ENCODE measurements at regions of chr7 and their contacts with region 1.

Region 1: GRCh38 chr7:101990811-101991418 is 173.5 kb downstream of the CUX1 start:
- DNase-seq: peak; percentile 88
- ATAC-seq: peak; percentile 87
- H3K4me3 ChIP-seq: peak overlapping the region; percentile 50
- H3K27ac ChIP-seq: peak overlapping the region; percentile 93
- H3K4me1 ChIP-seq: peaks cover 74% of the 10 kb centered on the region
- H3K27me3 ChIP-seq: no peaks in the 10 kb centered on the region
- CTCF ChIP-seq: peak; percentile 2 to 7 (median 3); a peak in 1 of 6 replicates
- EP300 ChIP-seq: peak; percentile 85 to 87
- POLR2A ChIP-seq: peak; percentile 43; the same call in 1 of the 2 replicates
- RAD21 ChIP-seq: peak; percentile 43; the same call in 1 of the 2 replicates

Region 2: DNA sequence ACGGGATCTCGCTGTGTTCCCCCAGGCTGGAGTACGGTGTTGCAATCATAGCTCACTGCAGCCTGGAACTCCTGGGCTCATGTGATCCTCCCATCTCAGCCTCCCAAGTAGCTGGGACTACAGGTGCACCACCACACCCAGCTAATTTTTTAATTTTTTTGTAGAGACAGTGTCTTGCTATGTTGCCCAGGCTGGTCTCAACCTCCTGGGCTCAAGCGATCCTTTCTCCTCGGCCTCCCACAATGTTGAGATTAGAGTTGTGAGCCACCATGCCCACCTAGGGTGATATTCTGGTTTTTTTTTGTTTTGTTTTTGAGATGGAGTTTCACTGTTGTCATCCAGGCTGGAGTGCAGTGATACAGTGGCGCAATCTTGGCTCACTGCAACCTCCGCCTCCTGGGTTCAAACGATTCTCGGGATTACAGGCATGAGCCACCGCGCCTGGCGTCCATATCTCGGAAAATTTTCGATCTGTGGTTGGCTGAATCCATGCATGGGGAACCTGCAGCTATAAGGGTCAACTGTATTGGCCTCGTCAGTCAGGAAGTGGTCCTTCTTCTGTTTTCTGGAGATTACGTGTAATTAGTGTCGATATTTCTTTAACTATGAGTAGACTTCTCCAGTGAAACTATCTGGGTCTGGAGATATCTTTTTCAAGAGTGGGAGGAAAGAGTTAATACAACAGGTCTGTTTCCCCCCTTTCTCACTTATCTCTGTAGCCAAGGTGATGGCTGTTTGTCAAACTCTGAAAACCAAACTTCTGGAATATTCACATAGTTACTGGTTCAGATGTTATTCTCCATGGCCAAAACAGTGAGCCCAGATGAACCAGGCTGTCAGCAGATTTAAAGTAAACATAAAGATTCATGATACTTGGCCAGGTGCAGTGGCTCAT is 725.0 kb before region 1 on chr7:
- CTCF ChIA-PET with region 1: no interaction called
- POLR2A ChIA-PET with region 1: no interaction called
- RAD21 ChIA-PET with region 1: no interaction called
- SMC1A ChIA-PET with region 1: no interaction called
- in situ Hi-C with region 1: no loop called
- intact Hi-C with region 1: no loop called
- DNase-seq: no peak
- ATAC-seq: 0 out of 3 replicates have a peak, but pooled peaks have one; percentile 17
- H3K4me3 ChIP-seq: no peak overlapping the region
- H3K27ac ChIP-seq: no peak overlapping the region
- H3K4me1 ChIP-seq: no peaks in the 10 kb centered on the region
- H3K27me3 ChIP-seq: no peaks in the 10 kb centered on the region
- CTCF ChIP-seq: no peak
- EP300 ChIP-seq: no peak
- POLR2A ChIP-seq: no peak
- RAD21 ChIP-seq: no peak

Region 3: DNA sequence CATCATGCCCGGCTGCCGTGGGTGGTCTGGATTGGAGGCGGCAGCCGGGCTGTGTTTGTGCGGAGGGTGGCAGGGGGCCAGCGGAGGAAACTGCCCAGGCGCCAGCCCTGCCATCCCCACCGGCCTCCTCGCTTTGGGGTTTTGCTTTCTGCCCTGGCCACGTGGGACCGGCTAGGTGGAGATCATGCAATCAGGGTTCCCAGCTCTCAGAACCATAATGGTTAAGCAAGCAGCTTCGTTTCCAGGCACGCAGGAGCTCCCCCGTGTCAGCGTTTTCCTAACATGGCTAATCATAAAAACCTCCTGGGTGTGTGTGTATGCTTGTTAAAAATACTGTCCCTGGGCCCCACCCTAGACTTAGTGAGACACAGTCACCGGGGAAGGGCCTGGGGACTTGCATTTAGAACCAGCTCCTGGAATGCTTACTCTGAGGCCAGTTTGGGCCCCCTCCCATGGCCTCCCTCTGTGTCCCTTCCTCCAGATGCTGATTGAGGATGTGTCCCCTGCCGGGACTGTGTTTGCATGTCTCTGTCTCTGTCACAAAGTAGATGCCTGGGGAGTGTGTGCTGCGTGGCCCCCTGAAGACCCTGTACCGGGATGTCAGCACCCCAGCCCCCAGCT is 54.2 kb before region 1 on chr7:
- CTCF ChIA-PET with region 1: interaction called, 3 read pairs
- POLR2A ChIA-PET with region 1: interaction called, 7 read pairs
- RAD21 ChIA-PET with region 1: interaction called, 15 read pairs
- SMC1A ChIA-PET with region 1: interaction called, 37 read pairs
- in situ Hi-C with region 1: no loop called
- intact Hi-C with region 1: loop called (anchors 2 kb)
- DNase-seq: no peak
- ATAC-seq: no peak
- H3K4me3 ChIP-seq: no peak overlapping the region
- H3K27ac ChIP-seq: no peak overlapping the region
- H3K4me1 ChIP-seq: peaks cover 63% of the 10 kb centered on the region
- H3K27me3 ChIP-seq: no peaks in the 10 kb centered on the region
- CTCF ChIP-seq: no peak
- EP300 ChIP-seq: no peak
- POLR2A ChIP-seq: no peak
- RAD21 ChIP-seq: no peak

Region 4: GRCh38 chr7:101974393-101974792 is 16.5 kb before region 1 on chr7:
- CTCF ChIA-PET with region 1: interaction called, 3 read pairs
- POLR2A ChIA-PET with region 1: interaction called, 4 read pairs
- RAD21 ChIA-PET with region 1: interaction called, 46 read pairs
- SMC1A ChIA-PET with region 1: interaction called, 29 read pairs
- in situ Hi-C with region 1: no loop called
- intact Hi-C with region 1: no loop called
- DNase-seq: no peak
- ATAC-seq: no peak
- H3K4me3 ChIP-seq: no peak overlapping the region
- H3K27ac ChIP-seq: no peak overlapping the region
- H3K4me1 ChIP-seq: peaks cover 11% of the 10 kb centered on the region; the same call in 1 of the 2 replicates
- H3K27me3 ChIP-seq: no peaks in the 10 kb centered on the region
- CTCF ChIP-seq: no peak
- EP300 ChIP-seq: no peak
- POLR2A ChIP-seq: no peak
- RAD21 ChIP-seq: no peak

Region 5: DNA sequence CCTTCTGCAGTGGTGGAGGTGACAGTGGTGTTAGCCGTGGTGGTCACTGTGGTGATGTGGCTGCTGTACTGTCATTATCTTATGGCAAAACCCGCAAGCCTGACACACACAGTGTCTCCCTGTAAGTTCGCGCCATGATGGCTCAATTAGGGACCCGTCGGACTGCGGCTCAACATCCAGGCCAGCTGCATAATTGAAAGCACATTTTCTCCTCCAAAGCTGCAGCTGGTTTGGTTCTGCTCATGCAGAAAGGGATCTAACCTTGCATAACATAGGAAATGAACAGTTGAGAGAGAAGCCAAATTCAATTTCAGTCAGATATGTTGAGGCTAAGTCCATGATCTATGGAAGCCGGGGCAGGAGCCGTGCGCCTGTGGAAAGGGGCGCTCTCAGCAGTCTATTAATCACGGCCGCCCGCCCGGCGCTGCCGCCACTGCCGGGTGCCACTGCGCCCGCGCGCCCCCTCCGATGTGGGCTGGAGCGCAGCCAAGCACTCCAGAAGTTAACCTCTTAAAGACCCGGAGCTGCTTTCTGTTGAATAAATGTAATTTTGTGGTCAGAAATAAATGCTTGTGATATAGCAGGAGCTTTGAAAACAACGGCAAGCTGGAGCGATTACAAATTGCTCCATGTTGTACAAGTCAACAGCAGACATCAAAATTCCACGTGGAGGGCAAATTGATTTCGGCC is 54.2 kb after region 1 on chr7:
- CTCF ChIA-PET with region 1: interaction called, 3 read pairs
- POLR2A ChIA-PET with region 1: interaction called, 3 read pairs
- RAD21 ChIA-PET with region 1: interaction called, 12 read pairs
- SMC1A ChIA-PET with region 1: interaction called, 9 read pairs
- in situ Hi-C with region 1: no loop called
- intact Hi-C with region 1: loop called (anchors 5 kb)
- DNase-seq: no peak
- ATAC-seq: no peak
- H3K4me3 ChIP-seq: no peak overlapping the region
- H3K27ac ChIP-seq: no peak overlapping the region
- H3K4me1 ChIP-seq: peaks cover 54% of the 10 kb centered on the region
- H3K27me3 ChIP-seq: no peaks in the 10 kb centered on the region
- CTCF ChIP-seq: no peak
- EP300 ChIP-seq: no peak
- POLR2A ChIP-seq: no peak
- RAD21 ChIP-seq: no peak

Region 6: DNA sequence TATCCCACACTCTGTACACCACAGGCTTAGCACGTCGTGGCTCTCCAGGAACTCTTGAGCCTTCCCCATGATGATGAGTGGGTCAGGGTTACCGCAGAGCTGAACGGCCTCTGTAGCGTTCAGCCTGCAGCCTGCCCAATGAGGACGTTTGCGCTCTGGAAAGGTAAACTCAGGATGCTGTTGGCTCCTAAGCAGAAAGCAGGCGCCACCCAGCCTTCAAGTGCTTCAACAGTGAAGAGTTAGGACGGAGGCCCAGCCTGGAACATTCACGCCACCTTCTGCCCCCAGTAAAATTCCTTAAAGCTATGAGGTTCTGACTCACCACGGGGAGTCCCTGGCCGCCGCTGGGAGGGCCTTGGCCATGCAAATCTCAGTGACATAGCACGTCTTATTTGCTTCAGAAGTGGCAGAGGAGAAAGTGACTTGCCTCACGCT is 134.2 kb after region 1 on chr7:
- CTCF ChIA-PET with region 1: interaction called, 3 read pairs
- POLR2A ChIA-PET with region 1: no interaction called
- RAD21 ChIA-PET with region 1: interaction called, 11 read pairs
- SMC1A ChIA-PET with region 1: interaction called, 4 read pairs
- in situ Hi-C with region 1: no loop called
- intact Hi-C with region 1: no loop called
- DNase-seq: peak; percentile 51
- ATAC-seq: peak; percentile 94
- H3K4me3 ChIP-seq: no peak overlapping the region
- H3K27ac ChIP-seq: peak overlapping the region; percentile 4; the same call in 1 of the 2 replicates
- H3K4me1 ChIP-seq: peaks cover 26% of the 10 kb centered on the region
- H3K27me3 ChIP-seq: no peaks in the 10 kb centered on the region
- CTCF ChIP-seq: peak in 2 of 3 experiments; percentile 21 to 79; a peak in 3 of 6 replicates
- EP300 ChIP-seq: no peak
- POLR2A ChIP-seq: no peak
- RAD21 ChIP-seq: peak; percentile 58

Region 7: DNA sequence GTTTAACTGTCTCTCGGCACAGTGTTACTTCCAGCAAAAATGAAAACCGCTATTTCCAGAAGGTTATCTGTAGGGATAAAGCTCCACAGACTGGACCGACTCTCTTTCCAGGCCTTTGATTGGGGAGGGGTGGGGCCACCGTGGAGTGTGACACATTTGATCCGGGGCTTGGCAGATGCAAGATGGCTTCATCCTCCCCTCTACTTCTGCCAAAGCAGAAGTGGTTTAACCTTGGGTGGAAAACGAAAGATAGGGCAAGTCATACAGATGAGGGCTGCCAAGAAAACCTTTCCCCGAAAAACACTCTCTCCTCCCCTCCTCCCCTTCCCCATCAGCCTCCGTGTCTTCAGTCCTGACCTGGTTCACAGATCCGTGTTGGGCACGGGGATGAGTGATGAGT is 156.1 kb after region 1 on chr7:
- CTCF ChIA-PET with region 1: no interaction called
- POLR2A ChIA-PET with region 1: no interaction called
- RAD21 ChIA-PET with region 1: no interaction called
- SMC1A ChIA-PET with region 1: no interaction called
- in situ Hi-C with region 1: no loop called
- intact Hi-C with region 1: no loop called
- DNase-seq: no peak
- ATAC-seq: no peak
- H3K4me3 ChIP-seq: no peak overlapping the region
- H3K27ac ChIP-seq: no peak overlapping the region
- H3K4me1 ChIP-seq: no peaks in the 10 kb centered on the region
- H3K27me3 ChIP-seq: no peaks in the 10 kb centered on the region
- CTCF ChIP-seq: no peak
- EP300 ChIP-seq: no peak
- POLR2A ChIP-seq: no peak
- RAD21 ChIP-seq: no peak

Region 8: GRCh38 chr7:102175423-102176170 is 184.7 kb after region 1 on chr7:
- CTCF ChIA-PET with region 1: no interaction called
- POLR2A ChIA-PET with region 1: no interaction called
- RAD21 ChIA-PET with region 1: no interaction called
- SMC1A ChIA-PET with region 1: no interaction called
- in situ Hi-C with region 1: no loop called
- intact Hi-C with region 1: no loop called
- DNase-seq: no peak
- ATAC-seq: no peak
- H3K4me3 ChIP-seq: no peak overlapping the region
- H3K27ac ChIP-seq: no peak overlapping the region
- H3K4me1 ChIP-seq: no peaks in the 10 kb centered on the region
- H3K27me3 ChIP-seq: no peaks in the 10 kb centered on the region
- CTCF ChIP-seq: no peak
- EP300 ChIP-seq: no peak
- POLR2A ChIP-seq: no peak
- RAD21 ChIP-seq: no peak

Measured in GM12878 (cell line).